Mammary epithelial cell (primary cell): ENCODE measurements at regions of chr11 and their contacts with region 1.

Region 1: DNA sequence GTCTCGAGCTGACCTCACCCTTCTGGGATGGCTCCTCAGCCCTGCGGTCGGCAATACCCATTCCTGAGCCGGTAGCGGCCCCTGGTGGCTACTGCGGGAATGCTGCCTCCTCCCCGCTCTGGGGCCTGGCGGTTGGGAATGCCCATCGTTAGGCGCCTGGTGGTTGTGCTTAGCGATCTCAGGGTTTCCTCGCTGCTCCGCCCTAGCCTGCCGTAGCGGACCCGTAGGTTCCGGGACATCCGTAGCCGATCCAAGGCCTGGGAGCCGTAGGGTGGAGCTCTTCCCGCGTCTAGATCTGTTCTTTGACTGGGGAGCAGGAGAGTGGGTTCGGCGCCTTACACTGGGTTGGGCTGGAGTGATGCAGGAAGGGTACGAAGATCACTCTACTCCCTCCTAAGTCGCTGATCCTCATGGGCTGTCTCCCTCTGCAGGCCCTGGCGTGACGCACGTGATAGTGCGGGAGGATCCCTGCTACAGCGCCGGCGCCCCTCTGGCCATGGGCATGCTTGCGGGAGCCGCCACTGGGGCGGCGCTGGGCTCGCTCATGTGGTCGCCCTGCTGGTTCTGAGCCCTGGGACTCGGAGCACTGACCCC is 14.8 kb downstream of the PLEKHB1 start:
- DNase-seq: peak; percentile 77
- H3K4me3 ChIP-seq: peak overlapping the region; percentile 16 to 56 (median 39)
- H3K27ac ChIP-seq: no peak overlapping the region
- H3K4me1 ChIP-seq: peaks cover 10% of the 10 kb centered on the region
- H3K27me3 ChIP-seq: no peaks in the 10 kb centered on the region
- CTCF ChIP-seq: peak; percentile 95 to 98

Region 2: GRCh38 chr11:73274752-73275743 is 386.1 kb before region 1 on chr11:
- CTCF ChIA-PET with region 1: no interaction called
- dilution Hi-C with region 1: no loop called
- in situ Hi-C with region 1: no loop called
- intact Hi-C with region 1: no loop called
- DNase-seq: no peak
- H3K4me3 ChIP-seq: no peak overlapping the region
- H3K27ac ChIP-seq: no peak overlapping the region
- H3K4me1 ChIP-seq: peaks cover 5% of the 10 kb centered on the region
- H3K27me3 ChIP-seq: no peaks in the 10 kb centered on the region
- CTCF ChIP-seq: no peak

Region 3: GRCh38 chr11:73335204-73335923 is 325.8 kb before region 1 on chr11:
- CTCF ChIA-PET with region 1: no interaction called
- dilution Hi-C with region 1: no loop called
- in situ Hi-C with region 1: no loop called
- intact Hi-C with region 1: no loop called
- DNase-seq: peak; percentile 55
- H3K4me3 ChIP-seq: no peak overlapping the region
- H3K27ac ChIP-seq: no peak overlapping the region
- H3K4me1 ChIP-seq: peaks cover 17% of the 10 kb centered on the region
- H3K27me3 ChIP-seq: no peaks in the 10 kb centered on the region
- CTCF ChIP-seq: peak; percentile 98 to 99

Region 4: GRCh38 chr11:73350908-73351636 is 310.1 kb before region 1 on chr11:
- CTCF ChIA-PET with region 1: interaction called, 3 read pairs
- dilution Hi-C with region 1: no loop called
- in situ Hi-C with region 1: no loop called
- intact Hi-C with region 1: loop called (anchors 1 kb)
- DNase-seq: peak; percentile 55
- H3K4me3 ChIP-seq: no peak overlapping the region
- H3K27ac ChIP-seq: no peak overlapping the region
- H3K4me1 ChIP-seq: peaks cover 7% of the 10 kb centered on the region
- H3K27me3 ChIP-seq: no peaks in the 10 kb centered on the region
- CTCF ChIP-seq: peak; percentile 97 to 99

Region 5: DNA sequence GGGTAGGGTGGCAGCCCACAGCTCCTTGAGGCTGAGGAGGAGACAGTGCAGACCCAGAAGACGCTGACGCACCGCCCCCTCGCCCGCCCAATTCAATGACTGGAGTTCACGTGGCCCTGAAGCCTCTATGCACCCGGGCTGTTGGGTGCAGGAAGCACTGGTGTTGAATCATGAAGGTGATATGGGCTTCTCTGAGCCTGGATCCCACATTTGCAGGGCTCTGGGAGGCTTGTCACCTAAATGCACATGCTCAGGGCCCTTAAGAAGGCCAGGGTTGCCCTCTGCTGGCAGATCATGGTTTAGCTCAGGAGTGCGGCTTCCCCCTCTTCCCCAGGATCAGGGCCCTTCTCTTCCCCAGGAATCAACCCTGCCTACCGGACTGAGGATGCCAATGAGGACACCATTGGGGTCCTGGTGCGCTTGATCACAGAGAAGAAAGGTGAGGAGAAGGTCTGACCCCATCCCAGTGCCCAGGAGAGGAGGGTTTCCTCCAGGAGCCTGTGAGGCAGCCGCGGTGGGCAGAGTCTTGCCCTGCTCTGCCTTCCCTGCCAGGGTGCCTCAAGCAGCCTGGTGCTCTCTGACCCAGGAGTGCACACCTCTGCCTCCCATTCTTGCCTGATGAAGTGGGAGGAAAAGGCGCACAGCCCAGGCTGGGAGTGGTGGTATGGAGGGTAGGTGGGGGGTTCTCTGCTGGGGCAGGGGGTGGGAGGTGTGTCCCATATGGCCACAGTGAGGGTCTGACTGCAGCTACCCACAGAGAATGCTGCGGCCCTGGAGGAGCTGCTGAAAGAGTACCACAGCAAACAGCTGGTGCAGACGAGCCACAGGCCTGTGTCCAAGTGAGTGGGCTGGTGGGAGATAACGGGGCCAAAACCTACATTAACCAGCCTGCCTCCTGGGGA is 267.4 kb before region 1 on chr11:
- CTCF ChIA-PET with region 1: no interaction called
- dilution Hi-C with region 1: no loop called
- in situ Hi-C with region 1: loop called in 1 of 2 experiments (anchors 5 kb)
- intact Hi-C with region 1: no loop called
- DNase-seq: peak; percentile 53
- H3K4me3 ChIP-seq: no peak overlapping the region
- H3K27ac ChIP-seq: no peak overlapping the region
- H3K4me1 ChIP-seq: peaks cover 4% of the 10 kb centered on the region
- H3K27me3 ChIP-seq: no peaks in the 10 kb centered on the region
- CTCF ChIP-seq: peak; percentile 74 to 81

Region 6: DNA sequence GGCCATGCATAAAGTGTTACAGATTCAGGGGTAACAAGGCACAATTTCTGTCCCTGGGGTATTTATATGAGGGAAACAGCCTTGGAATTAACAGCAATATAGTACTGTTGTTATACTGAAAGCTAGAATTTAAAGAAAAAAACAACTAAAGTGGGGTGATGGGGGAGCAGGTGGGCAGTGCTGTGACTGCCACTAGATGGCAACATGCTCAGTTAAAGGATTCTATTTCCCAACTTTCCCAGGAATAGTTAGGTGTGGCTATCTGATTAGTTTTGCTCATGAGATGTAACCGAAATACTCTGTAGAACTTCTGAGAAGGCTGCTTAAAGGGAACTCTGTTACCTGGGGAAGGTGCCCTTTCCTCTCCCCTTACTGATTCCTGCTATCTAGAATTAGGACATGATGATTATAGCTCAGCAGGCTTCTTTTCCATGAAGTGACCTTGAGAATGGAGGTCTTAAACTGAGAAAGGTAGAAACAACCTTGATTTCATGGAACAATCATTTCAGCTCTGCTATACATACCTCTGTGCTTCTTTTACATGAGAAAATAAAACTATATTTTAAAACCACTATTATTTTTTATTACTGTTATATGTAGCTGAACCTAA is 182.3 kb before region 1 on chr11:
- CTCF ChIA-PET with region 1: interaction called, 3 read pairs
- dilution Hi-C with region 1: no loop called
- in situ Hi-C with region 1: loop called in 1 of 2 experiments (anchors 10 kb)
- intact Hi-C with region 1: loop called (anchors 1 kb)
- DNase-seq: peak; percentile 51
- H3K4me3 ChIP-seq: no peak overlapping the region
- H3K27ac ChIP-seq: peak overlapping the region; percentile 3
- H3K4me1 ChIP-seq: peaks cover 6% of the 10 kb centered on the region
- H3K27me3 ChIP-seq: no peaks in the 10 kb centered on the region
- CTCF ChIP-seq: peak; percentile 91 to 96

Region 7: GRCh38 chr11:73521621-73522020 is 139.5 kb before region 1 on chr11:
- CTCF ChIA-PET with region 1: no interaction called
- dilution Hi-C with region 1: no loop called
- in situ Hi-C with region 1: no loop called
- intact Hi-C with region 1: no loop called
- DNase-seq: peak; percentile 29
- H3K4me3 ChIP-seq: no peak overlapping the region
- H3K27ac ChIP-seq: no peak overlapping the region
- H3K4me1 ChIP-seq: no peaks in the 10 kb centered on the region
- H3K27me3 ChIP-seq: no peaks in the 10 kb centered on the region
- CTCF ChIP-seq: no peak

Region 8: DNA sequence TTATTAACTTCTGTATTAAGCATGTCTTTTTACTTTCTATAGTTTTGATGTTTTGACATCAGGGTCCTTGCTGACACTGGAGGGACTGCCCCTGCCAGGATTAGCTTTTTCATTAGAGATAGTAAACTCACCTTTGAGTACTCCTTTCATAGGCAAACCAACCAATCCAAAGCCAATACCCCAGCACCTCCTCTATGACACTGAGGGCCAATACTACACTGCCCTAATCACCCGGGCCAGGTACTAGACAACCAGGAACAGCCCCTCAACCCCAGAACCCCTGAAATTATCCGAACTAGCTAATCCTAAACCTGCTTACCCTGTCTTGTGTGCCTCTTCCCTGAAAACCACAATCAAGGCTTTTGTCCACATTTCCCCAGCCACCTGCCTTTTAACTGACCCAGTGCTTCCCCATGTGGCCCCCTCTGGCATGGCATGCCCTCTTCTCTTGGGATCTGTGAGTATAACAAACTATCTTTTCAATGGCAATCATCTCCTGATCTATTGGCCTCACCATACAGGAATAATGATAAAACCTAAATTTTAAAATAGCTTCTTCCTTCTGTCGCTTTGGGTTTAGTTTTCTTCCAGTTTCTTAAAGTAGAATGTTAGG is 68.6 kb after region 1 on chr11:
- CTCF ChIA-PET with region 1: no interaction called
- dilution Hi-C with region 1: no loop called
- in situ Hi-C with region 1: no loop called
- intact Hi-C with region 1: no loop called
- DNase-seq: no peak
- H3K4me3 ChIP-seq: no peak overlapping the region
- H3K27ac ChIP-seq: no peak overlapping the region
- H3K4me1 ChIP-seq: no peaks in the 10 kb centered on the region
- H3K27me3 ChIP-seq: no peaks in the 10 kb centered on the region
- CTCF ChIP-seq: peak; percentile 42 to 51

Region 9: GRCh38 chr11:73749118-73749517 is 88.0 kb after region 1 on chr11:
- CTCF ChIA-PET with region 1: no interaction called
- dilution Hi-C with region 1: loop called (anchors 5 kb)
- in situ Hi-C with region 1: no loop called
- intact Hi-C with region 1: no loop called
- DNase-seq: no peak
- H3K4me3 ChIP-seq: no peak overlapping the region
- H3K27ac ChIP-seq: no peak overlapping the region
- H3K4me1 ChIP-seq: peaks cover 16% of the 10 kb centered on the region
- H3K27me3 ChIP-seq: no peaks in the 10 kb centered on the region
- CTCF ChIP-seq: no peak